Activated CD4-positive, alpha-beta memory T cell treated with anti-CD3 and anti-CD28 coated beads, Interleukin-2, amount 10 ng/mL, durations not matched to agents 7 days and 5 days (primary cell): ENCODE measurements at regions of chr1 and their contacts with region 1.

Region 1: GRCh38 chr1:100443811-100444571 is 91.7 kb downstream of the CDC14A start:
- DNase-seq: peak; percentile 50
- H3K4me3 Mint-ChIP-seq: peak overlapping the region; percentile 80
- H3K27ac Mint-ChIP-seq: peak overlapping the region; percentile 98
- H3K4me1 Mint-ChIP-seq: peaks cover 89% of the 10 kb centered on the region
- H3K27me3 Mint-ChIP-seq: no peaks in the 10 kb centered on the region

Region 2: GRCh38 chr1:100299521-100300222 is 144.3 kb before region 1 on chr1:
- CTCF ChIA-PET with region 1: no interaction called
- POLR2A ChIA-PET with region 1: no interaction called
- DNase-seq: no peak
- H3K4me3 Mint-ChIP-seq: no peak overlapping the region
- H3K27ac Mint-ChIP-seq: no peak overlapping the region
- H3K4me1 Mint-ChIP-seq: peaks cover 17% of the 10 kb centered on the region
- H3K27me3 Mint-ChIP-seq: no peaks in the 10 kb centered on the region

Region 3: DNA sequence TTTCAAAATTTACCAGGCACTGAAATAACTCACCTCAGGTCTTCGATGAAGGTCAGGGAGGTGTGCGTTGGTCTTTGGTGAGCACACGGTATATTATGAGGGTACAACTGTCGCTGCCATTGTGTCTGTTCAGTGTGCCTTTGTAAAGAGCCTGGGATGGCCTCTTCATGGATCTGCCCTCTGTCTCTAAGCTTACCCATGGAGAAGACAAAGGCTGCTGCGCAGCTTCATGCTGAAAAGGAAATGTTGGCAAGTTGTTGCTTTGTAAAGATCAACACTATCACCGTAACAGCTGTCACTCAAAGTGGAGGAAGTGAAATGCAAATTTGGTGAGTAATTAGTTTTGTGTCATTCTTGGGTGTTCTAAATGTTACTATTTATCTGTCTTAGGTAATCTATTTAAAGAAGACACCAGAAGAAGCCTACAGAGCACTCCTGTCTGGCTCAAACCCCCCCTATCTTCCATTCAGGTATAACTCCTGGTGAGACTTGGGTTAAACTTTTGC is 20.1 kb before region 1 on chr1:
- CTCF ChIA-PET with region 1: interaction called, 7 read pairs
- POLR2A ChIA-PET with region 1: interaction called, 44 read pairs
- DNase-seq: peak; percentile 39
- H3K4me3 Mint-ChIP-seq: peak overlapping the region; percentile 56
- H3K27ac Mint-ChIP-seq: peak overlapping the region; percentile 90
- H3K4me1 Mint-ChIP-seq: peaks cover 60% of the 10 kb centered on the region
- H3K27me3 Mint-ChIP-seq: no peaks in the 10 kb centered on the region

Region 4: DNA sequence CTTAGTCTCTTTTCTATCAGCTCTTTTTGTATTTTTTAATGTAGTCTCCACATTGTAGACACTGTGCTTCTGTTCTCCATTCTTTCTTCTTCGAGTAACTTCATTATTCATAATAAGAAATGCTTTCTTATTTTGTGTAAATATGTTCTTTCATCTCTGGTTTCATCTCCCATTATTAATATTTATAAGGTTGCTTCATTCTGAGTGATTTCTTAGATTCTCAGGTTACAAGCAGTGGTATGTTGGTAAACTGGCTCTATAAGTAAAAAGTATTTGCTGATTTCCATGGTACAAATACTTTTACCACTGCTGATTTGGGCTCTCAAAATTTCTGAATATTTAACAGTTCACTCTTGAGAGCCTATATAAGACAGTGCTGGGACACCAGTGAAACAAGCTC is 10.4 kb before region 1 on chr1:
- CTCF ChIA-PET with region 1: interaction called, 5 read pairs
- POLR2A ChIA-PET with region 1: interaction called, 15 read pairs
- DNase-seq: no peak
- H3K4me3 Mint-ChIP-seq: no peak overlapping the region
- H3K27ac Mint-ChIP-seq: peak overlapping the region; percentile 4
- H3K4me1 Mint-ChIP-seq: peaks cover 70% of the 10 kb centered on the region
- H3K27me3 Mint-ChIP-seq: no peaks in the 10 kb centered on the region

Region 5: DNA sequence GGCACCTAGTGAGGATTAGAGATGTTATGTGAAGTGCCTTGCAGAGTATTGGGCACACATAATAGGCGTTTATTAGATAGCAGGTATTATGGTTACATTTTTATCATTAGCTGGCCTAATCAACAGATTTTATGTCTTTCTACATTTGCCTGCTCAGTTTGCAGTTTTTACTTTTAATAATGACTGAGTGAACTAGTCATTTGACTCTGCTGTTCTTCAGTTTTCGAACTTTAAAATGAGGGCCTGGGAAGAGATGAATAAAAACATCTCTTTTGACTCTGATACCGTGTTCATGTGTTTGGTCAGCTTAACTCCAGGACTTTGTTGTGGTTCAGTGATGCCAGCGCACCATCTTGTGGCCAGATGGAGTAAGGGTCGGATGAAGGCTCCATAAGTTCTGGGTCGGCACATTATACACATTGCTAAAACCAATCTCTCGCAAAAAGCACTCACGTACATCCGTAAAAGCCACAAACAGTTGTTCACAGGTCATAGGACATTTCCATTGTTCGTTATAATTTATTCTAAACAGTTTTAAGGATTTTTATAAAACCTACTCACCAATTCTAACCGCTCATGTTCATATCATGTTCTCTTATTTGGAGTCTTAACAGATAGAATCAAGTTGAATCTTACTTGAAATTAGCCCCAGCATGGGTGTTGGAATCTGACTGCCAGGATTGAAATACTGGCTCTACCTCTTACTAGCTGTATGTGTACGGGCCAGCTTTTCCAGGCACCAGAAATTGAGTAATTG is 15.5 kb after region 1 on chr1:
- CTCF ChIA-PET with region 1: interaction called, 22 read pairs
- POLR2A ChIA-PET with region 1: interaction called, 28 read pairs
- DNase-seq: peak; percentile 78
- H3K4me3 Mint-ChIP-seq: no peak overlapping the region
- H3K27ac Mint-ChIP-seq: peak overlapping the region; percentile 25
- H3K4me1 Mint-ChIP-seq: peaks cover 51% of the 10 kb centered on the region
- H3K27me3 Mint-ChIP-seq: no peaks in the 10 kb centered on the region

Region 6: DNA sequence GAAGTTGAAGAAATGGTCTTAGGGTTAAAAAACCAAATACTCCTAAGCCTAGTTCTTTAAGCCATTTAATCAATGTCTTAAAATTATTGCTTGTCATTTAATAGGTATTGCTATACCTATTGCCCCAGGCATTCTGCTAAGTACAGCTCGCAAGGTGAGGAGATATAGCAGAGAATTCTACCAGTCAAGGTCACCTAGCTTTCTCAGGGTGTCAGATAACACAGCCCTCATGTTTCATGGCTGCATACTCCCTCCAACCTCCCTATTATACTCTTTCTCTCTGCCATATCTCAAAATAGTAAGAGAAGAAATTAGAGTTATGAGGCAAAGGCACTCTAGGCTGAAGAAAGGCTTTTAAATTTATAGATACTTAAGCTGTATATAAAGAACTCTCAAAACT is 25.6 kb after region 1 on chr1:
- CTCF ChIA-PET with region 1: no interaction called
- POLR2A ChIA-PET with region 1: no interaction called
- DNase-seq: no peak
- H3K4me3 Mint-ChIP-seq: no peak overlapping the region
- H3K27ac Mint-ChIP-seq: no peak overlapping the region
- H3K4me1 Mint-ChIP-seq: peaks cover 8% of the 10 kb centered on the region
- H3K27me3 Mint-ChIP-seq: no peaks in the 10 kb centered on the region

Region 7: DNA sequence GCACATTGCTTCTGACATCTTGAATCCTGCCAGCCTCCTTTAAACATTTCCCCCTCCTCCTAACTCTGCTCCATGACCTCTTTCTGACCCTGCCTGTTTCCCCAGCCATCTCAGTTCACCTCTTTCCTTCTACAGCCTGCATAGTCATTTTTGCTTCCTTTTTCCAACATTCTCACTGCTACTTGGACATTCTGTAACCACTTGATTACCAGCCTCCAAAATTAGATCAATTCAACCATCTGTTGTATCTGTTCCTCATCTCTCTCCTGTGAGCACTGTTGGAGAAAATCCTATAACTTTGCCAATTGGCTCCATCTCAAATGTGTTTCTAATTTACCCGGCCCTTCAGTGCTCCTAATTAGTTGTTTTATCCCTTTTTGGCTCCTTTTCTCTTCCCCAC is 66.5 kb after region 1 on chr1:
- CTCF ChIA-PET with region 1: no interaction called
- POLR2A ChIA-PET with region 1: no interaction called
- DNase-seq: no peak
- H3K4me3 Mint-ChIP-seq: no peak overlapping the region
- H3K27ac Mint-ChIP-seq: no peak overlapping the region
- H3K4me1 Mint-ChIP-seq: peaks cover 2% of the 10 kb centered on the region
- H3K27me3 Mint-ChIP-seq: no peaks in the 10 kb centered on the region

Region 8: DNA sequence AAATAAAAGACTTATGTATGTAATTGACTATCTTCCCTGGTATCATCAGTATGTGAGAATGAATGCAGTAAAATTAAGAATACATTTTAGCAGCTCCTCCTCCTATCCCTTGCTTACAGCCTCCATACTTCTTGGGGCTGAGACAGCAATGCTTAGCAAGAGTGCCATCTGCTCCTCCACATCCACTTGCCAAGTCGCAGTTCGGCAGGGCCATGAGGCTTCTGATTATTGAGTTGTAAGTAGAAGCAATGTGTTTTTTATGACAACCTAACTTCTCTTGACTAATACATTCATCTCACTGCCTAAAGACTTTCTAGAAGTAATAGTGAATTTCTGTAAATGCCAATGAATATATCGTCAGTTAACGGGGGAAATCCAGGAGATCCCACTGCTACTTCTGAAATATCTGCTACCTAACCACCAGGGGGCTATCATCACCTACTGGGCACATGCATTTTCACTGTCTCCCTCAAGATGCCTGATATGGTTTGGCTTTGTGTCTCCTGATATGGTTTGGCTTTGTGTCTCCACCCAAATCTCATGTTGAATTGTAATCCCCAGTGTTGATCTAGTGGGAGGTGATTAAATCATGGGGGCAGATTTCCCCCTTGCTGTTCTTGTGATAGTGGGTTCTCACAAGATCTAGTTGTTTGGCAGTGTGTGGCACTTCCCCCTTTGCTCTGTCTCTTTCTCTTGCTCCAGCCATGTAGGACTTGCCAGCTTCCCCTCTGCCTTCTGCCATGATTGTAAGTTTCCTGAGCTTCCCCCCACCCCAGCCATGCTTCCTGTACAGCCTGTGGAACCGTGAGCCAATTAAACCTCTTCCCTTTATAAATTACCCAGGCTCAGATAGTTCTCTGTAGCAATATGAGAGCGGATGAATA is 391.0 kb after region 1 on chr1:
- CTCF ChIA-PET with region 1: no interaction called
- POLR2A ChIA-PET with region 1: no interaction called
- DNase-seq: no peak
- H3K4me3 Mint-ChIP-seq: no peak overlapping the region
- H3K27ac Mint-ChIP-seq: no peak overlapping the region
- H3K4me1 Mint-ChIP-seq: peaks cover 4% of the 10 kb centered on the region
- H3K27me3 Mint-ChIP-seq: peaks cover 5% of the 10 kb centered on the region